Left lung (tissue), 14 donors: ENCODE measurements at regions of chr12 and their contacts with region 1.

Region 1: DNA sequence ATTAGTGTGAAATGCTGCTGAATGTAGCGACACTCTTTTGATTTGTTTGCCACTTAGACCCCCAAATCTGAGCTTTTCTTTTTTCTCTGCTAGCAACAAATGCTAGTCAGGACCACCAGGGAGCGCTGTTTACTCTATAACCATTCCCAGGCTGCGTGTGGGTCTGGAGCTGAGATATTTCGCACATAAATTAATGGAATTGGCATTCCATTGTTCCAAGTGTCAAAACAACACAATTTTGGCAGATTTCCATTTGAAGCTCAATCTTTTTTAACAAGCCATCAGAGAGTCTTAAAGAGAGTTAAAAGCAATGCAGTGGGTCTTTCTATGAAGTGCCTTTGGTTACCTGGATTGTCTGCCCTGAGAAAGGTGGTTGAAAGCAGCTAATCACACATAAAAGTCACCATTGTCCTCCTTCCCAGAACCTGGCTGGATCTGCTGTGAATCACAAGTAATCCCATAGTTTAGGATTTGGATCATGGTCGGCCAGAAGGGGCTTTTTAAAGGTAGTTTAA is 7.4 kb upstream of the TMEM132C start:
- DNase-seq: peak in 2 of 4 donors; percentile 53 to 63
- ATAC-seq: peak; percentile 38
- H3K4me3 ChIP-seq: no peak overlapping the region
- H3K27ac ChIP-seq: no peak overlapping the region
- H3K4me1 ChIP-seq: no peaks in the 10 kb centered on the region
- H3K27me3 ChIP-seq: peaks cover 0 to 43% of the 10 kb centered on the region in 2 donors
- CTCF ChIP-seq: peak; percentile 24 to 77

Region 2: GRCh38 chr12:127957001-127957660 is 302.5 kb before region 1 on chr12:
- intact Hi-C with region 1: no loop called
- DNase-seq: no peak
- ATAC-seq: no peak
- H3K4me3 ChIP-seq: no peak overlapping the region
- H3K27ac ChIP-seq: no peak overlapping the region
- H3K4me1 ChIP-seq: no peaks in the 10 kb centered on the region
- H3K27me3 ChIP-seq: no peaks in the 10 kb centered on the region
- CTCF ChIP-seq: no peak

Region 3: DNA sequence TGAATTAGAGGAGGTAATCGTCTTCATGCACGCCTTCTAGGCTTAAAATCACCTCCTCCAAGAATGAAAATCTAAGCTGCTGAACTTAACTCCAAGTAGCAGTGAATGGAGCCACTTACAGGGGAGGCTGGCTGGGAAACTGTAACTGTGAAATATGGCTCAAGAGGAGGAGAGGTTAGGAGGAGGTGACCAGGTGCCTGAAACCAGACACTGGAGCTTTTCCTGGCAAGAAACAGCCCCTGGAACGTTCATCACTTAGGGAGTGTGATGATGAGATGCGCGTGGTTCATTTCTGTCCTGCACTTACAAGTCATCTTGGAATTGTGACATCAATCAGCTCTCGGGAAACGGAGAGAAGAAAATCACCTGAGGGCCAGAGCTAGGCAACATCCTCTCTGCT is 54.9 kb before region 1 on chr12:
- intact Hi-C with region 1: no loop called
- DNase-seq: no peak
- ATAC-seq: no peak
- H3K4me3 ChIP-seq: no peak overlapping the region
- H3K27ac ChIP-seq: no peak overlapping the region
- H3K4me1 ChIP-seq: no peaks in the 10 kb centered on the region
- H3K27me3 ChIP-seq: no peaks in the 10 kb centered on the region
- CTCF ChIP-seq: no peak

Region 4: GRCh38 chr12:128387811-128388422 is 128.3 kb after region 1 on chr12:
- intact Hi-C with region 1: loop called in 1 of 2 experiments (anchors 10 kb)
- DNase-seq: peak in 2 of 4 donors; percentile 42 to 53
- ATAC-seq: peak; percentile 87
- H3K4me3 ChIP-seq: no peak overlapping the region
- H3K27ac ChIP-seq: no peak overlapping the region
- H3K4me1 ChIP-seq: no peaks in the 10 kb centered on the region
- H3K27me3 ChIP-seq: peaks cover 0 to 48% of the 10 kb centered on the region in 2 donors
- CTCF ChIP-seq: peak; percentile 46 to 55

Region 5: DNA sequence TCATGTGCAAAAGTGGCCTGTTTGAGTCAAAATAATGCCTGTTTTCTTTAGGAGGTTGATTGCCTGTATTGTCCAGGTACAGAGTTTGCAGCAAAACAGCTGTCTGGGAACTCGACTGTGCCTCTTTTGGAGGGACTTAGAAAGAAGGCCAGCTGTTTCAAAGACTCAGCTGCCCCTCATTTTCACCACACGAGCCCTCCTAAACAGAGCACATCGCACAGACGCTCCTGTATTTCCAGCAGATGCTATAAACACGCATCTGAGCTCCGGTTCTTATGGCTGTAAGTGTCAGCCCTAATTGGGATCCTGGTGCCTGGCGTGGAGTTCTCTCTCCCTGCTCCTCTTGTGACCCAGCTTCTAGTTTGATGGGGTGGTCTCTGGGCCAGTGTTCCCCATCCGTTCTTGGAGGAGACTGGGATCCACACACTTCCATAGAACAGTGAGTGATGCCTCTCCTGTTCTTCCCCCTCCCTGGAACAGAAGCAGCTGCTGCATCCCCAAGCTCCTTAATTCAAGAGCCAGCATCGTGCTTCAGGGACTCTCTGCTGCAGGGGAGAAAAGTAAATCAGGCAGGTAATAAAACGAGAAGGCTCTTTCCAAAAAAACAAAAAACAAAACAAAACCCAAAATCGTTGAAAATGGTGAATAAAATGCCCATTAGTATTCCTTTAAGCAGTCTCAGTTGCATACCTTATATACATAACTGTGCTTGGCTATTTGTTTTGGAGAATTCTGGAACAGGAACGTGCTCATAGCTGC is 295.1 kb after region 1 on chr12:
- intact Hi-C with region 1: no loop called
- DNase-seq: no peak
- ATAC-seq: no peak
- H3K4me3 ChIP-seq: no peak overlapping the region
- H3K27ac ChIP-seq: no peak overlapping the region
- H3K4me1 ChIP-seq: no peaks in the 10 kb centered on the region
- H3K27me3 ChIP-seq: peaks cover 0 to 20% of the 10 kb centered on the region in 2 donors
- CTCF ChIP-seq: no peak